GM10248 (cell line): ENCODE measurements at regions of chr22 and their contacts with region 1.

Region 1: GRCh38 chr22:20033045-20033706 is 12.3 kb downstream of the TANGO2 start:
- DNase-seq: no peak
- CTCF ChIP-seq: no peak

Region 2: DNA sequence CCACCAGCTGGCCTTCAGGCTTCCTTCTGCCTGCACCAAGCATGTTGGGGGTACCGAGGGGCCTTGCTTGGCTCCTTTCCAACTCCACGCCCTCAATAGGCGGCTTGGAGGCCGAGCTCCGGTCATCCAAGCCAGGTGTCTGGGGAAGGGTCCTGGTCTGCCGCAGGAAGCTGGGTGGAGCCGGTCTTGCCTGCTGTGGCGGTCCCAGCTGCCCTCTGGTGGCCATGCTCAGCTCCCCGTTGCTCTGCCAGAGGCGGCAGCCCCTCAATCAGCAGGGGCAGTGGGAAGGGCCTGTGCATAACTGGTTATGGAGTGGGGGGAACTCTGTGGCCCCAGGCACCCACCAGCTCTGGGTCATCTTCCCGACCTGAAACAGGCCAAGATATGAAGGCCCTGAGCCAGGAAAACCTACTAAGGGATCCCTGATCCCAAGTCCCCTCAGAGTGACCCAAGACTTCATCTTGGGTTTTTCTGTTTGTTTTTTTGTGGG is 19.7 kb before region 1 on chr22:
- CTCF ChIA-PET with region 1: interaction called, 16 read pairs
- POLR2A ChIA-PET with region 1: no interaction called
- DNase-seq: peak; percentile 70
- CTCF ChIP-seq: peak; percentile 77

Region 3: DNA sequence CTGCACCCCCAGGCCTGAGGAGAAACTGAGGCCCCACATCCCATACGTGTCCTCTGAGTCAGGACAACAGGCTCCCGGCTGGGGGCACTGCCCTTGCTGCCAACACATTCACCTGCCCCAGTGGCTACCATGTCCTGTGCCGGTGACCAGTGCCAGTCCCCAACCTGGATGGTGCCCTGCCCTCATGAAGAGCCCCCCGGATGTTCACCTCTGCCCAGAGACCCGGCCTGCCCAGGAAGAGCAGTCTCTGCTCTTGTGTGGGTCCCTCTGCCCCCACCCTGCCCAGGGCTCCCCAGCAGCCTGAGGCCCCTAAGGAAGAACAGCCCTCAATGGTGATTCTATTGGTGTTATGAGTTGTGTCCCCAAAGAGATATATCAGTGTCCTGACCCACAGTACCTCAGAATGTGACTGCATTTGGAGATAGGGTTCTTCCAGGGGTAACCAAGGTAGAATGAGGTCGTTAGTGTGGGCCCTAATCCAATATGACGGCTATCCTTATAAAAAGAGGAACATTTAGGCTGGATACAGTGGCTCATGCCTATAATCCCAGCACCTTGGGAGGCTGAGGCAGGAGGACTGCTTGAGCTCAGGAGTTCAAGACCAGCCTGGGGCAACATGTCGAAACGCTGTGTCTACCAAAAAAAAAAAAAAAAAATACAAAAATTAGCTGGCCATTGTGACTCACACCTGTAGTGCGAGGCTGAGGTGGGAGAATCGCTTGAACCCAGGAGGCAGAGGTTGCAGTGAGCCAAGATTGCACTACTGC is 33.6 kb after region 1 on chr22:
- CTCF ChIA-PET with region 1: no interaction called
- POLR2A ChIA-PET with region 1: no interaction called
- DNase-seq: no peak
- CTCF ChIP-seq: no peak